AG04449 (cell line): ENCODE measurements at regions of chr6 and their contacts with region 1.

Region 1: GRCh38 chr6:144544266-144544830 is 259.2 kb downstream of the UTRN start:
- DNase-seq: no peak
- H3K4me3 ChIP-seq: no peak overlapping the region
- CTCF ChIP-seq: no peak

Region 2: DNA sequence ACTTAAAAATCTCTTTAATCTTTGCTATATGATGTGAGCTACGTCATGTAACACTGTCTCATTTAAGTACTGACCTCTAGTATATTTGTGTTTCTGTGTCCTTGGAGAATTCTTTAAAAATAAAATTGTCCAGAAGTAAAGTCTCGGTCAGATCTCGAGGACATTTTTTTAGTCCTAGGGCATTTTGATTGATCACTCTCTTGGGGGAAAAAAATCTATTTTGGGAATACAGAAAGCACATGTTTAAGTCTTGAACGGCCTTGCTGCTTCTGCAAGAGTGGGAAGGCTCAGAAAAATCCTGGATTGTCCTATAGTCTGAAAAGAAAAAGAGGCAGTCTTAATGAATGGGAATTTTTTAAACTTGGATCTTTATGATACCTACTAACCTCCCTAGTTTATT is 24.9 kb before region 1 on chr6:
- CTCF ChIA-PET with region 1: no interaction called
- POLR2A ChIA-PET with region 1: no interaction called
- DNase-seq: no peak
- H3K4me3 ChIP-seq: no peak overlapping the region
- CTCF ChIP-seq: no peak

Region 3: GRCh38 chr6:144534180-144534579 is 10.2 kb before region 1 on chr6:
- CTCF ChIA-PET with region 1: interaction called, 21 read pairs
- POLR2A ChIA-PET with region 1: no interaction called
- DNase-seq: no peak
- H3K4me3 ChIP-seq: no peak overlapping the region
- CTCF ChIP-seq: no peak

Region 4: GRCh38 chr6:144726129-144726522 is 181.8 kb after region 1 on chr6:
- CTCF ChIA-PET with region 1: no interaction called
- POLR2A ChIA-PET with region 1: no interaction called
- DNase-seq: no peak
- H3K4me3 ChIP-seq: no peak overlapping the region
- CTCF ChIP-seq: no peak